ENCODE measurements at regions of chr12 and their contacts with region 1.

Region 1: DNA sequence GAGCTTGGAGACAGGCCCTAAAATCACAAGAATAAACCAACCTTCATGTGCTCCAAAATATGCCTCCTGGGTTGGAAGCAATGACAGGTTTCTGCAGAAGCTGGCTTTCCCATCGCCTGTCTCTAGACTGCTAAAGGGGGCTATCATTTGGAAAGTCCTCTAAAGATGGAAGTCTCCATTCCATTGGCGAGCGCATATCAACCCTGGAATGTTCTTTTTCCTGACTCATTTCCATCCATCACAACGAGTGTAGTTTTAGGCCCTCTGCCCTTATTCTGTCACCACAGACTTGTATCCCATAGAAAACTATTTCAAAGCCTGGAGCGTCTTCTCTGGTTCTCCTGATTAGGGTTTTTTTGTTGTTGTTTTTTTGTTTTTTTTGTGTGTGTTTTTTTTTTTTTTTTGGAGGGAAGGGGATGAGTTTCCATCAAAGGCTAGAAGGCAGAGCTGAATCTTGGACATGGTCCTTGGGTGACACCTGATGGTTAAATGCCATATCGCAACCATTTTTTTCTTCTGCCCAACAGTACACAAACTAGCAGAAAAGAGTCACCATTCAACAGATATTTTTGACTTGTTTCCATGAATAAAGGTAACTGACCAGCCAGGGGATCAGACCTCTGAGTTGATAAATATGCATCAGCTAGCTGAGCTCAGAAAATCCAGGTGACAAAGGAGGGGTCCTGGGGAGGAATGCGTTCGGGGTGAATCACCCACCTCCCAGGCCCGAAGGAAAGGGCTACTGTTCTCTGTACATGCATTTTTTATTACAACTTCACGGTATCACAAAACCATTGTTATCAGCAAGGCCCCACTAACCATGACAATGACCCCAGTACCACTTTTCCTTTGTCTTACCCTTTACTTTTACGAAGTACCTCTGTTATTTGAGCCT is 40.5 kb downstream of the KCNA5 start:
- DNase-seq: peak in 1 of 2 donors; percentile 84
- H3K4me3 ChIP-seq: no peak overlapping the region
- H3K27ac ChIP-seq: no peak overlapping the region
- H3K4me1 ChIP-seq: no peaks in the 10 kb centered on the region
- H3K27me3 ChIP-seq: peaks cover 0 to 28% (median 0%) of the 10 kb centered on the region in 3 donors
- CTCF ChIP-seq: peak in 5 of 7 experiments; percentile 39 to 83 (median 58)
- EP300 ChIP-seq: no peak
- POLR2A ChIP-seq: no peak

Region 2: DNA sequence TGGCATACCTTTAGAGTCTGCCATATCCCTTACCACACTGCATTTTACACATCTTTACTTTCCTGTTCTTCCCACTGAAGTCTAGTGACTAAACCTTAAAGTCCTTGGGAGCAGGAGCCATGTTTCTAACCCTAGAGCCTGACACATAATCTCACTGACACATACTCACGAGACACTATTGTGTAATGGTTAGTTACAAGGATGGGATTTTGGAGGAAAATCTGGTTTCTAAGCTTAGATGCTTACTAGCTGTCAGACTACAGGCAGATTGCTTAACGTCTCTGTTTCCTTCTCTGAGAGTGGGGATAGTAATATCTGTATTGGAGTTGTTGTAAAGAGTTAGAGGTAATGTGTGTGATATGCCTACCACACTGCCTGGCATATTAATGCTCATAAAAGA is 528.4 kb before region 1 on chr12:
- intact Hi-C with region 1: no loop called
- DNase-seq: no peak
- H3K4me3 ChIP-seq: no peak overlapping the region
- H3K27ac ChIP-seq: no peak overlapping the region
- H3K4me1 ChIP-seq: no peaks in the 10 kb centered on the region
- H3K27me3 ChIP-seq: no peaks in the 10 kb centered on the region
- CTCF ChIP-seq: no peak
- EP300 ChIP-seq: no peak
- POLR2A ChIP-seq: no peak

Region 3: GRCh38 chr12:5022465-5023061 is 61.6 kb before region 1 on chr12:
- intact Hi-C with region 1: loop called (anchors 5 kb)
- DNase-seq: peak; percentile 44 to 85
- H3K4me3 ChIP-seq: no peak overlapping the region
- H3K27ac ChIP-seq: no peak overlapping the region
- H3K4me1 ChIP-seq: no peaks in the 10 kb centered on the region
- H3K27me3 ChIP-seq: peaks cover 0 to 27% (median 7%) of the 10 kb centered on the region in 3 donors
- CTCF ChIP-seq: peak in 5 of 7 experiments; percentile 74 to 80 (median 77)
- EP300 ChIP-seq: no peak
- POLR2A ChIP-seq: no peak

Measured in stomach (tissue), 19 donors.